Gastrocnemius medialis (tissue), 4 donors: ENCODE measurements at regions of chr6 and their contacts with region 1.

Region 1: GRCh38 chr6:111259089-111259831 is 172.0 kb downstream of the SLC16A10 start:
- DNase-seq: peak; percentile 98 to 99
- ATAC-seq: peak; percentile 99
- H3K4me3 ChIP-seq: peak overlapping the region; percentile 69 to 99 (median 86)
- H3K27ac ChIP-seq: peak overlapping the region; percentile 84 to 97 (median 91)
- H3K4me1 ChIP-seq: peaks cover 12 to 14% of the 10 kb centered on the region in 2 donors
- H3K27me3 ChIP-seq: no peaks in the 10 kb centered on the region
- CTCF ChIP-seq: peak; percentile 94 to 97 (median 95)
- POLR2A ChIP-seq: peak; percentile 69 to 72

Region 2: DNA sequence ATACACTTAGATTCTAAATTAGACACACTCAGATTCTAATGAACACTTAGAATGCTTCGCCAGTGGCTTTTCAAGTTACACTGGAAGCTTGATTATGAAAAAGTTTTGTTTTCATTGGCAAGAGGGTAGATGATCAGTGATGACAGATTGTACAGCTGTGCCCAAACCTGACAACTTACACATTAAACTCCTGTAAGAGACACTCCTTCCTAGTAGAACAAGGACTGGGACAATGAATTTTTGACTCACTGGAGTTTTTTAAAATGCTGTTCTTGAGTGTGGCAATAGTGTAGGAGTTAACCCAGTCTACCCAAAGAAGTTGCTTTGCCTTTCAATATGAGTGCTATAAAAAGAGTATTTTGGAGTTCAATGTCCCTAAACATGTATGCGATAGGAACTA is 31.2 kb before region 1 on chr6:
- in situ Hi-C with region 1: no loop called
- intact Hi-C with region 1: loop called (anchors 2 kb)
- DNase-seq: no peak
- ATAC-seq: peak; percentile 35 to 58
- H3K4me3 ChIP-seq: no peak overlapping the region
- H3K27ac ChIP-seq: peak overlapping the region; percentile 84 to 91 (median 88)
- H3K4me1 ChIP-seq: peaks cover 28 to 36% of the 10 kb centered on the region in 2 donors
- H3K27me3 ChIP-seq: no peaks in the 10 kb centered on the region
- CTCF ChIP-seq: no peak
- POLR2A ChIP-seq: no peak

Region 3: DNA sequence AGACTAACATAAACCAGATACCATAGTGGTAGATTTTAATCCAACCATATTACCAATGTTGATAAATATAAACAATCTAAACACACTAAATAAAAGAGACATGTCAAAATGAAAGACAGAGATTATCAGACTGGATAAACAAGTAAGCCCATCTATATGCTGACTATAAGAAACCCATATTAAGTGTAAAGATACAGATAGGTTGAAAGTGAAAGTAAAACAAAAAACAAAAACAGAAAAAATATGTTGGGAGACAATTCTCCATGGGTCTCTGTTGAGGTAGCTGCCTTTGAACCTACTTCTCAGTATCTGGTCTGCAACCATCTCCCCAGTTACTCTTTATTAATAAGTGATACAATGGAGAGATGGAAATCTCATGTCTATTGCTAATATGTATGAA is 202.6 kb after region 1 on chr6:
- in situ Hi-C with region 1: no loop called
- intact Hi-C with region 1: no loop called
- DNase-seq: no peak
- ATAC-seq: peak in 1 of 2 donors; percentile 30
- H3K4me3 ChIP-seq: no peak overlapping the region
- H3K27ac ChIP-seq: peak overlapping the region in 2 of 4 donors; percentile 4 to 67
- H3K4me1 ChIP-seq: peaks cover 16 to 31% of the 10 kb centered on the region in 2 donors
- H3K27me3 ChIP-seq: no peaks in the 10 kb centered on the region
- CTCF ChIP-seq: no peak
- POLR2A ChIP-seq: no peak

Region 4: GRCh38 chr6:111642463-111643158 is 383.4 kb after region 1 on chr6:
- in situ Hi-C with region 1: loop called (anchors 10 to 25 kb)
- intact Hi-C with region 1: loop called (anchors 2 kb)
- DNase-seq: peak in 1 of 2 donors; percentile 75
- ATAC-seq: peak; percentile 63 to 79
- H3K4me3 ChIP-seq: peak overlapping the region in 2 of 4 donors; percentile 3 to 8
- H3K27ac ChIP-seq: peak overlapping the region in 1 of 4 donors; percentile 29
- H3K4me1 ChIP-seq: peaks cover 15 to 21% of the 10 kb centered on the region in 2 donors
- H3K27me3 ChIP-seq: no peaks in the 10 kb centered on the region
- CTCF ChIP-seq: peak; percentile 53 to 72 (median 62)
- POLR2A ChIP-seq: no peak

Region 5: GRCh38 chr6:111683749-111684267 is 424.5 kb after region 1 on chr6:
- in situ Hi-C with region 1: no loop called
- intact Hi-C with region 1: no loop called
- DNase-seq: peak in 1 of 2 donors; percentile 60
- ATAC-seq: peak; percentile 50 to 62
- H3K4me3 ChIP-seq: no peak overlapping the region
- H3K27ac ChIP-seq: peak overlapping the region; percentile 68 to 76 (median 73)
- H3K4me1 ChIP-seq: peaks cover 33 to 52% of the 10 kb centered on the region in 2 donors
- H3K27me3 ChIP-seq: no peaks in the 10 kb centered on the region
- CTCF ChIP-seq: no peak
- POLR2A ChIP-seq: no peak

Region 6: DNA sequence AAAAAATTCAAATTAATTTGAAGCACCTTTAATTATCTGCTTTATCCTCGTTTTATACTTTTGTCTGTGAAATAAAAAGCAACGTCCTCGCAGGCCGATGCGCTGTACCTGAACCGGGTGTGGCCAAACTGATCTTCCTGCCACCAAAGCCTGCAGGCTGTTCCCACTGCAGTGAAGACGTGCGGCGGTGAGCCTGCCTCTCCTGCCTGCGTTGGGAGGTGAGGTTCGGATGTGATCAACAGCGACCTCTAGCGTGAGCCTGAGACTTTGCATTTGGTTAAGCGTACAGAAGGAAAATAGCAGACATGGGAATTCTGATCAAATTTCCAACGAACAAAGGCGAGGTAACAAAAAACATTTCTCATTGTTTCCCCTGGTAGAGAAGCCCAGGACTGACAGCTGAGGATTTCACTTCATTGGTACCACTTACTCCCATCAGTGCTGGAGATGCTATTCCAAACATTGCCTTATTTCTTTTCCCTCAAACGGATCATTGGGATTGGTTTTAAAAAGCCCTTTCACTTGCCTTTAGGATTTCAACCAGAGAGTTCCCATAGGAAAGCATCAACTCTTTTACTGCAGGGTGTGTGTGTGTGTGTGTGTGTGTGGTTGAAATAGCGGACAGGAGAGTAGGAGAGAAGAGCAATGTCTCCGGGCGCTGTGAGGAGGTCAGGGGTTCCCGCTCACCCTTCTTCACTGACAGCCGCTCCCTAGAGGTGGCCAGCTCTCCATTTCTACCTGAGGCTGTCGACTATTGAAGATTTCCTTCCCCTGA is 738.0 kb after region 1 on chr6:
- in situ Hi-C with region 1: no loop called
- intact Hi-C with region 1: loop called (anchors 1 kb)
- DNase-seq: peak; percentile 76 to 79
- ATAC-seq: peak; percentile 70 to 92
- H3K4me3 ChIP-seq: peak overlapping the region; percentile 8 to 39 (median 34)
- H3K27ac ChIP-seq: peak overlapping the region; percentile 21 to 64 (median 54)
- H3K4me1 ChIP-seq: peaks cover 0 to 8% of the 10 kb centered on the region in 2 donors
- H3K27me3 ChIP-seq: no peaks in the 10 kb centered on the region
- CTCF ChIP-seq: peak; percentile 84 to 93 (median 89)
- POLR2A ChIP-seq: no peak

Region 7: GRCh38 chr6:112043032-112044007 is 784.1 kb after region 1 on chr6:
- in situ Hi-C with region 1: loop called in 1 of 4 experiments (anchors 10 kb)
- intact Hi-C with region 1: loop called (anchors 2 kb)
- DNase-seq: peak; percentile 53 to 68
- ATAC-seq: peak; percentile 86
- H3K4me3 ChIP-seq: peak overlapping the region; percentile 64 to 85 (median 67)
- H3K27ac ChIP-seq: peak overlapping the region; percentile 44 to 73 (median 66)
- H3K4me1 ChIP-seq: peaks cover 1 to 8% of the 10 kb centered on the region in 2 donors
- H3K27me3 ChIP-seq: no peaks in the 10 kb centered on the region
- CTCF ChIP-seq: peak; percentile 77 to 94 (median 87)
- POLR2A ChIP-seq: no peak

Region 8: GRCh38 chr6:112061605-112062004 is 802.3 kb after region 1 on chr6:
- in situ Hi-C with region 1: loop called in 1 of 4 experiments (anchors 25 kb)
- intact Hi-C with region 1: no loop called
- DNase-seq: no peak
- ATAC-seq: no peak
- H3K4me3 ChIP-seq: no peak overlapping the region
- H3K27ac ChIP-seq: no peak overlapping the region
- H3K4me1 ChIP-seq: no peaks in the 10 kb centered on the region
- H3K27me3 ChIP-seq: no peaks in the 10 kb centered on the region
- CTCF ChIP-seq: no peak
- POLR2A ChIP-seq: no peak